PC-3 (cell line): ENCODE measurements at regions of chr5 and their contacts with region 1.

Region 1: GRCh38 chr5:14142827-14143548 is at the start of gene TRIO:
- DNase-seq: peak; percentile 97
- ATAC-seq: peak; percentile 61
- H3K4me3 ChIP-seq: peak within 1 kb of the TSS; percentile 98
- H3K27ac ChIP-seq: peak within 1 kb of the TSS; percentile 89
- H3K4me1 ChIP-seq: peaks cover 28% of the 10 kb centered on the region
- H3K27me3 ChIP-seq: no peaks in the 10 kb centered on the region
- CTCF ChIP-seq: peak; percentile 61
- total RNA-seq, gene TRIO: 211 and 271 TPM in 2 replicates

Region 2: DNA sequence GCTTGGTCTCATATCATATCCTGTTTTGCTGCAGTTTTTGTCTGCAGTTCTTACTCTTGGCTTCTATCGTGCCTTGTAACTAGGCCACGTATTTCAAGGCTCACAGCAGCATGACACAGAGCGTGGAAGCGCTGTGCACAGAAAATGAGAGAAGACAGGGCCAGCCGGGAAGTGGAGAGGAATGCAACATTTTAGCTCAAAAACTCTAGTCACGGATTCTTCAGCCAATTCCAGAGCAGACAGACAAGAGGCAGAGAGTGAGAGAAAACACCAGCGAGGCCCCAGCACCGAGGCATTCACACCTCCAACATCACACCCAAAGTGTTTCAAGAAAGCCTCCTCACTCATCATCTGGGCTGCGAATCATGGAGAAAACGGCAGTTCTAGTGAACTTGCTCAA is 359.3 kb before region 1 on chr5:
- CTCF ChIA-PET with region 1: no interaction called
- POLR2A ChIA-PET with region 1: no interaction called
- intact Hi-C with region 1: no loop called
- DNase-seq: no peak
- ATAC-seq: no peak
- H3K4me3 ChIP-seq: no peak overlapping the region
- H3K27ac ChIP-seq: no peak overlapping the region
- H3K4me1 ChIP-seq: peaks cover 7% of the 10 kb centered on the region; the same call in 1 of the 2 replicates
- H3K27me3 ChIP-seq: no peaks in the 10 kb centered on the region
- CTCF ChIP-seq: no peak

Region 3: GRCh38 chr5:13987843-13988464 is 155.0 kb before region 1 on chr5:
- CTCF ChIA-PET with region 1: interaction called, 3 read pairs
- POLR2A ChIA-PET with region 1: no interaction called
- intact Hi-C with region 1: loop called (anchors 2 kb)
- DNase-seq: peak; percentile 95
- ATAC-seq: peak; percentile 41
- H3K4me3 ChIP-seq: no peak overlapping the region
- H3K27ac ChIP-seq: peak overlapping the region; percentile 55
- H3K4me1 ChIP-seq: peaks cover 35% of the 10 kb centered on the region
- H3K27me3 ChIP-seq: no peaks in the 10 kb centered on the region
- CTCF ChIP-seq: peak; percentile 98

Region 4: DNA sequence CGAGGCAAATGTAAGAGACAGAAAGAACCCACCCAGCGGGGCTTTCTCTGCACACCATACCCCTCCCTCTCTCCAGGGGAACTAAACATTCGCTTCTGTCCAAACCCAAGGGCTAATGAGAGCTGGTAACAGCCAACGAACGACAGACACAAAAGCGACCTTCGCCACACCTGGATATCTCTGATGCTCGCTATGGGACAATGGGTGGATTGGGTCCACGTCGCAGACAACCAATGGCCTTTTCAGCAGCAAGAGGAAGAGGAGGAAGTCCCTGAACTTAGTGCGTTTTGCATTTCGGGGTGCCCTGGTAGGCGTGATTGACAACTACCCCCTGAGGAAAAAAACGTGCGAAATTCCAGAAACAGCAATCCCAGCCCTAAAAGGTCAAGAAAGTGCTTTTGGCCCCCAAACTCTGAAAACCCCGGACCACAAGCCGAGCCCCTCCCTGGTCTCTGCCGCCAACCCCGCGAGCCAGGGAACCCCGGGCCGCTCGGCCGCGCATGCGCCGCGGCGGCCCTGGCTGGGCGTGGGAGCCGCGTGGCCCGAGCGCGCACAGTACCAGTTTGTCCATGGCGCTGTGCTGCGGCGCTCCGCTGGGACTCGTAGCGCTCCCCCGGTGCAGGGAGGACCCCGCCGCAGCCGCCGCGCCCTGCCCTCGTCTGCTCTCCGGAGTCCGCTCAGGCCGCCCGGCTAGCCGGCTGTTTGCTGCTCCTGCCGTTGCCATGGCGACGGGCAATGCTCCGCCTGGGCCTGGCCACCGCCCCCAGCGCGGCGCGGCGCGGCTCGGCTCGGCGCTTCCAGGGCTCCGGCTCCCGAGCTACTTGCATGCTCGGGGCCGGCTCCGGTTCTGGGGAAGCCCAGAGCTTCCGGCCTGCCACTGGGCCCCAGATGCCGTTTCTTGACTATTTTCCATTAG is 131.6 kb before region 1 on chr5:
- CTCF ChIA-PET with region 1: no interaction called
- POLR2A ChIA-PET with region 1: interaction called, 3 read pairs
- intact Hi-C with region 1: loop called (anchors 2 kb)
- DNase-seq: peak; percentile 95
- ATAC-seq: peak; percentile 72
- H3K4me3 ChIP-seq: peak overlapping the region; percentile 75
- H3K27ac ChIP-seq: peak overlapping the region; percentile 96
- H3K4me1 ChIP-seq: peaks cover 39% of the 10 kb centered on the region
- H3K27me3 ChIP-seq: no peaks in the 10 kb centered on the region
- CTCF ChIP-seq: no peak

Region 5: GRCh38 chr5:14108170-14108996 is 34.6 kb before region 1 on chr5:
- CTCF ChIA-PET with region 1: no interaction called
- POLR2A ChIA-PET with region 1: no interaction called
- intact Hi-C with region 1: loop called (anchors 2 kb)
- DNase-seq: peak; percentile 91
- ATAC-seq: peak; percentile 78
- H3K4me3 ChIP-seq: peak overlapping the region; percentile 34
- H3K27ac ChIP-seq: peak overlapping the region; percentile 93
- H3K4me1 ChIP-seq: peaks cover 63% of the 10 kb centered on the region
- H3K27me3 ChIP-seq: no peaks in the 10 kb centered on the region
- CTCF ChIP-seq: peak; percentile 88

Region 6: DNA sequence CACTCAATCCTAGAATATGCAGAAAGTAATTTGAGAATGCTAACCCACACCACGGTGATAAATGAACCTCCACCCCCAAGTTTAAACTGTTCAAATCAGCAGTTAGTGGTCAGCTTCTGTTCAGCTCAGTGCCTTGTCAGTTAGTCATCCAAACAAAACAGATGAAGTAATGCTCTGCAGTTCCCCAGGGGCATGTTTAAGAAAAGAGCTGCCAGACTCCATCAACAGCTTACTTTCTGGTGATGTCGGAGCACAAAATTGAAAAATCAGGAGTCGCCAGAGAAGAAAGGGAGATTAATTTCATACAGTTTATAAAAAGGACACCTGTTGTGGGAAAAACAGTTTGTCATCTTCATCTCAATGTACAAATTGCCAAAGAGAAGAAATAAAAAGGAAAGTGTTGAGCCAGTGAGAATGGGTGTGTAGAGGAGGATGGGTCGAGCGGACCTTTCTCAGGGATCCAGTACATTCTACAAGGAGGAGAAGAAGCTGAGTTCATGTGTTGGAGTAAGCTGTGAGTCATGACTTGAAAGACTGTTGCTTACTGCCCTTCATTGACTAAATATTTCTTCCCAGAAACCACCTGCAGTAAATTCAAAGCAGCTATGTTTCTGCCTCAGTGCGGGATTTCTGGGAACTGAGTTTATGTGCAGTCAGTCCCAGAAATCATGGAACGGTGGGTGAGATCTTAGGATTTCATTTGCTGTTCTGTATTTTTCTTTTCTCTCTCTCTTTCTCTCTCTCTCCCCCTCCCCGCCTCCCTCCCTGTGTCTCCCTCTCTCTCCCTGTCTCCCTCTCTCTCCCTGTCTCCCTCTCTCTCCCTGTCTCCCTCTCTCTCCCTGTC is 13.9 kb after region 1 on chr5:
- CTCF ChIA-PET with region 1: interaction called, 7 read pairs
- POLR2A ChIA-PET with region 1: interaction called, 10 read pairs
- intact Hi-C with region 1: no loop called
- DNase-seq: peak; percentile 98
- ATAC-seq: peak; percentile 88
- H3K4me3 ChIP-seq: peak overlapping the region; percentile 63
- H3K27ac ChIP-seq: peak overlapping the region; percentile 94
- H3K4me1 ChIP-seq: peaks cover 74% of the 10 kb centered on the region
- H3K27me3 ChIP-seq: no peaks in the 10 kb centered on the region
- CTCF ChIP-seq: no peak

Region 7: GRCh38 chr5:14190194-14191164 is 47.5 kb after region 1 on chr5:
- CTCF ChIA-PET with region 1: no interaction called
- POLR2A ChIA-PET with region 1: interaction called, 7 read pairs
- intact Hi-C with region 1: loop called (anchors 2 kb)
- DNase-seq: peak; percentile 99
- ATAC-seq: peak; percentile 84
- H3K4me3 ChIP-seq: peak overlapping the region; percentile 47
- H3K27ac ChIP-seq: peak overlapping the region; percentile 94
- H3K4me1 ChIP-seq: peaks cover 83% of the 10 kb centered on the region
- H3K27me3 ChIP-seq: no peaks in the 10 kb centered on the region
- CTCF ChIP-seq: no peak

Region 8: GRCh38 chr5:14270209-14270702 is 127.3 kb after region 1 on chr5:
- CTCF ChIA-PET with region 1: interaction called, 4 read pairs
- POLR2A ChIA-PET with region 1: interaction called, 3 read pairs
- intact Hi-C with region 1: loop called (anchors 1 kb)
- DNase-seq: peak; percentile 83
- ATAC-seq: peak; percentile 5
- H3K4me3 ChIP-seq: no peak overlapping the region
- H3K27ac ChIP-seq: peak overlapping the region; percentile 96
- H3K4me1 ChIP-seq: peaks cover 55% of the 10 kb centered on the region
- H3K27me3 ChIP-seq: no peaks in the 10 kb centered on the region
- CTCF ChIP-seq: peak; percentile 95